ENCODE measurements at regions of chr10 and their contacts with region 1.

Region 1: GRCh38 chr10:15802375-15802949 is 57.8 kb downstream of the MINDY3 start:
- DNase-seq: no peak
- H3K4me3 Mint-ChIP-seq: no peak overlapping the region
- H3K27ac Mint-ChIP-seq: peak overlapping the region; percentile 69
- H3K4me1 Mint-ChIP-seq: peaks cover 14% of the 10 kb centered on the region
- H3K27me3 Mint-ChIP-seq: no peaks in the 10 kb centered on the region

Region 2: DNA sequence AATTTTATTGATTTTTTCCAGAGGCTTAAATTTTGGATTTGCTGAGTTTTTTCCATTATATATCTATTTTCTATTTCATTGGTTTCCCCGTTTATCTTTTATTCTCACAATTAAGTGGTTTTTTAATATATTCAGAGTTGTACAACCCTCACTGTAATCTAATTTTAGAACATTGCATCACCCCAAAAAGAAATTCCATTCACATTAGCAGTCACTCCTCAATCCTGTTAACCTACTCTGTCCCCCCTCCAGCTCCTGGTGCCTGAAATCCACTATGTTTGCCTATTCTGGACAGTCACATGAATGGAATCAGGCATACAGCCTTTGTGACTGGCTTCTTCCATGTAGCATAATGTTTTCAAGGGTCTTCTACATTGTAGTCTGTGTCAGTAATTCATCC is 26.9 kb before region 1 on chr10:
- intact Hi-C with region 1: no loop called
- DNase-seq: no peak
- H3K4me3 Mint-ChIP-seq: no peak overlapping the region
- H3K27ac Mint-ChIP-seq: no peak overlapping the region
- H3K4me1 Mint-ChIP-seq: no peaks in the 10 kb centered on the region
- H3K27me3 Mint-ChIP-seq: no peaks in the 10 kb centered on the region

Region 3: GRCh38 chr10:15789793-15790525 is 12.5 kb before region 1 on chr10:
- intact Hi-C with region 1: loop called (anchors 2 kb)
- DNase-seq: no peak
- H3K4me3 Mint-ChIP-seq: no peak overlapping the region
- H3K27ac Mint-ChIP-seq: no peak overlapping the region
- H3K4me1 Mint-ChIP-seq: peaks cover 2% of the 10 kb centered on the region
- H3K27me3 Mint-ChIP-seq: no peaks in the 10 kb centered on the region